ENCODE measurements at regions of chr17 and their contacts with region 1.

Region 1: DNA sequence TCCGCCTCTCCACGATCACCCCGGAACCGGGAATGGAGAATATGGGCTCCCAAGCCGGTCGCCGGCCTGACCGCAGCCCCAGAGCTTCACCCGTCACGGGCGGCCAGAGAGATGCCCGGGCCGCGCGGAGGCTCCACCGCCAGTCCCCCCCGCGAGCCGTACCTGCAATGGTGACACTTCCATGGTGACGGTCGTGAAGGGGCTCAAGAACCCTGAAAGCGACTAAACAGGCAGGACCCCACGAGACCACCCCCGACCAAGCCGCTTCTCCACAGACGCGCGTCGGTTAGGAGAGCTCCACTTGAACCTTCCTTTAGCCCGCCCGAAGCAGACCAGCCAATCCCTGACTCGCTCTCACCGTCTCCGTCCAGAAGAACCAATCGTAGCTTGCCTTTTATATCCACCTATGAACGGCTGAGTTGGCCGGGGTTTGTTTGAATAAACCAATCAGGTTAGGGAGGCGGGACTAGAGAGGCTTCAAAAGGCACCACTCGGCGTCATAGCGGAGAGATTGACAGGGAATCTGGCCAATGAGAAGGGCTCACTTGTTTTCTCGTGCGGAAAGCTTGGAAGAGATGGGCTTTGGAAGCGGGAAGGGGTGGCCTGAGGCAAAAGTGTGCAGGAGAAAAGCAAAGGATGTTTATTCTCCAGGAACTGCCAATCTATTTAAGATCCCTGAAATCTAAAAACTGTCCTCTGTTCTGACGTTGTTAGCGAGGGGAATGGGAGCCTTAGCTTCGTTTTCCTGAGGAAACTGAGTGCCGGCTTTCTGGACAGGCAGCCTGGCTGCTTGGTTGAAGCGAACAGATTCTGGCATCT is at the start of gene TOP2A:
- DNase-seq: peak; percentile 90 to 99 (median 95)
- ATAC-seq: peak; percentile 99
- H3K4me3 ChIP-seq: peak within 1 kb of the TSS; percentile 75
- H3K4me3 Mint-ChIP-seq: peak within 1 kb of the TSS; percentile 92
- H3K27ac ChIP-seq: peak within 1 kb of the TSS; percentile 42 to 49
- H3K27ac Mint-ChIP-seq: peak within 1 kb of the TSS; percentile 91
- H3K4me1 ChIP-seq: peaks cover 6% of the 10 kb centered on the region
- H3K4me1 Mint-ChIP-seq: peaks cover 17% of the 10 kb centered on the region
- H3K27me3 ChIP-seq: no peaks in the 10 kb centered on the region
- H3K27me3 Mint-ChIP-seq: peaks cover 3% of the 10 kb centered on the region
- CTCF ChIP-seq: no peak
- total RNA-seq, gene TOP2A: 2.9 TPM

Region 2: GRCh38 chr17:40203131-40203530 is 214.7 kb before region 1 on chr17:
- CTCF ChIA-PET with region 1: no interaction called
- POLR2A ChIA-PET with region 1: no interaction called
- intact Hi-C with region 1: loop called in 1 of 2 experiments (anchors 5 kb)
- DNase-seq: no peak
- ATAC-seq: no peak
- H3K4me3 ChIP-seq: no peak overlapping the region
- H3K4me3 Mint-ChIP-seq: no peak overlapping the region
- H3K27ac ChIP-seq: no peak overlapping the region
- H3K27ac Mint-ChIP-seq: no peak overlapping the region
- H3K4me1 ChIP-seq: no peaks in the 10 kb centered on the region
- H3K4me1 Mint-ChIP-seq: peaks cover 8% of the 10 kb centered on the region
- H3K27me3 ChIP-seq: peaks cover 0 to 4% of the 10 kb centered on the region in 2 experiments
- H3K27me3 Mint-ChIP-seq: peaks cover 6% of the 10 kb centered on the region
- CTCF ChIP-seq: no peak

Region 3: DNA sequence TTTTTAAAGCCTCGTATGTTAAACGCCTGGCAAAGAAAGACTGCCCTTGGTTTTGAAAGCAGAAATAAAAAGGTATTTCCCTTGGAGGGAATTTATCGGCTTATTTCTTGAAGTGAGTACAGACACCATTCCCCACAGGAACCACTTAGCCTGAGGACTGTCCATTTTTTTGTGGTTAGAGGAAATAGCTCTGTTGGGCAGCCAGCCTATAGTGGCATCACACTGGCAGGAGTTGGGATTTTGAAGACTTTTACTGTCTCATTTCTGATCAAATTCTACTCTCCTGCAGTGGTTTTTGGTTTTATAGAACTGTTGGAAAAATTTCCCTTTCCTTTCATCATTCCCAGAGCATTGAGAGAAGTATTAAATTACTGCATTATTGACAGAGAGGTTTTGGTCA is 164.3 kb before region 1 on chr17:
- CTCF ChIA-PET with region 1: no interaction called
- POLR2A ChIA-PET with region 1: no interaction called
- intact Hi-C with region 1: no loop called
- DNase-seq: no peak
- ATAC-seq: no peak
- H3K4me3 ChIP-seq: no peak overlapping the region
- H3K4me3 Mint-ChIP-seq: no peak overlapping the region
- H3K27ac ChIP-seq: no peak overlapping the region
- H3K27ac Mint-ChIP-seq: no peak overlapping the region
- H3K4me1 ChIP-seq: no peaks in the 10 kb centered on the region
- H3K4me1 Mint-ChIP-seq: peaks cover 31% of the 10 kb centered on the region
- H3K27me3 ChIP-seq: no peaks in the 10 kb centered on the region
- H3K27me3 Mint-ChIP-seq: no peaks in the 10 kb centered on the region
- CTCF ChIP-seq: no peak

Region 4: DNA sequence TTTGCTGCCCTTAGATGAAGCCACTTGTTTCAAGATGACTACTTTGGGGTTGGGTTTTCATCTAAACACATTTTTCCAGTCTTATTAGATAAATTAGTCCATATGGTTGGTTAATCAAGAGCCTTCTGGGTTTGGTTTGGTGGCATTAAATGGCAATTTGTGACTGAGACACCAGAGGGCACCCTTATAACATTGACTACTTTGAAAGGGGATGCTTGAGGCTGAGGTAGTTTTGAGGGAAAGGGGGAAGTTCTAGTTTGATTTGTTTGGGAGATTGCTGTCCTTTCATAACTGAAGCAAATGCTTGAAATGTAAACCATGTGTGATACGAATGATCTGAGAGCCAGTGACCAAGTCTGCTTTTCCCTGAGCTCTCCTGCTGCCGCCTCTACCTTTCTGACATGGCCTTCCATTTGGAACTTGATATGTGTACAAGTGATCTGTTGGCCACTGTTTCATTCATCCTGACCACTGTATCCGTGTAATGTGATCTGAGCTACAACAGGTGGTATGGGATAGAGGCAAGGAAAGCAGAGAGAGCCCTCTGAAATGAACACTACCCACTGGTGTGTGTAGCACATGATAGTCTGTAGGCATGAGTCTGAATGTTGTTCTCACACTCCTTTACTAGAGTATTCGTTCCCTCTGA is 114.7 kb before region 1 on chr17:
- CTCF ChIA-PET with region 1: interaction called, 12 read pairs
- POLR2A ChIA-PET with region 1: interaction called, 3 read pairs
- intact Hi-C with region 1: loop called in 1 of 2 experiments (anchors 2 kb)
- DNase-seq: peak in 5 of 9 experiments; percentile 41 to 83 (median 66)
- ATAC-seq: peak; percentile 69
- H3K4me3 ChIP-seq: no peak overlapping the region
- H3K4me3 Mint-ChIP-seq: no peak overlapping the region
- H3K27ac ChIP-seq: no peak overlapping the region
- H3K27ac Mint-ChIP-seq: no peak overlapping the region
- H3K4me1 ChIP-seq: peaks cover 35% of the 10 kb centered on the region
- H3K4me1 Mint-ChIP-seq: peaks cover 12% of the 10 kb centered on the region
- H3K27me3 ChIP-seq: no peaks in the 10 kb centered on the region
- H3K27me3 Mint-ChIP-seq: no peaks in the 10 kb centered on the region
- CTCF ChIP-seq: peak; percentile 85

Region 5: GRCh38 chr17:40399185-40399584 is 18.6 kb before region 1 on chr17:
- CTCF ChIA-PET with region 1: interaction called, 7 read pairs
- POLR2A ChIA-PET with region 1: no interaction called
- intact Hi-C with region 1: loop called in 1 of 2 experiments (anchors 2 kb)
- DNase-seq: peak in 2 of 9 experiments; percentile 71 to 78
- ATAC-seq: peak; percentile 55
- H3K4me3 ChIP-seq: no peak overlapping the region
- H3K4me3 Mint-ChIP-seq: no peak overlapping the region
- H3K27ac ChIP-seq: no peak overlapping the region
- H3K27ac Mint-ChIP-seq: no peak overlapping the region
- H3K4me1 ChIP-seq: no peaks in the 10 kb centered on the region
- H3K4me1 Mint-ChIP-seq: peaks cover 16% of the 10 kb centered on the region
- H3K27me3 ChIP-seq: no peaks in the 10 kb centered on the region
- H3K27me3 Mint-ChIP-seq: no peaks in the 10 kb centered on the region
- CTCF ChIP-seq: peak; percentile 74

Region 6: DNA sequence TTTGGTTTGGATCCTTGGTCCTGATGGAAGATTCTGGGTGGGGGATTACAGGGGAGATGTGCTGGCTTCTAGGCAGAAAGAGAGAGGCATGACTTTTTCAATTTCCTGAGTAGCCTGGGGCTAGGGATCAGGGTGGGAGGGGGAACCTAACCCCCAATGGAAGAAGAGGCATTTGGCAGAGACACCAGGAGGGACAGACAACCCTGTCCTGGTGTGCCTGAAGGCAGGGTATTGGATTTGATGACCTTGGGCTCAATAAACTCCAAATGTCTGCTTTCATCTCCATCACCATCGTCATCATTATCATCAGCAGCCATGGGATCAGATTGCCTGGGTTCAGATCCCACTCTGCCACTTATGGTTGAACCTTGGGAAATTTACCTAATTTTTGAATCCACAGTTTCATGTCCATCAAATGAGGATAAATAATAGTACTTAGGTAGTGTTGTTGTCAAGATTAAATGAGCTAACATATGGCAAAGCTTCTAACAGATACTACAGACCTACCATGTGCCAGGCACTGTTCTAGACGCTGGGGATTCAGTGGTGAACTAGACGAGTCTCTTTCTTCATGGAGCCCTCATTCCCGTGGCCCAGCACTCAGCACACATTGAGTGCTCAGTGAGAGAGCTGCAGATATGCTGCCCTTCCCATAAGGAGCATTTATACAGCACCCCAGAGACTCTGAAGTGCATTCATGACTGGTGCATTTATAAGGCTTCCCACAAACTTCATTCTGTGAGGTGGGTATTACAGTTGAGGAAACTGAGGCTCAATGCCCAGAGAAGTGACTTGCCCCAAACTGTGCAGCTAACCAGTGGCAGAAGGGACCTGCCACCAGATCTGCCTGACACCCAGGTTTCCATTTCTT is 52.2 kb after region 1 on chr17:
- CTCF ChIA-PET with region 1: no interaction called
- POLR2A ChIA-PET with region 1: no interaction called
- intact Hi-C with region 1: no loop called
- DNase-seq: no peak
- ATAC-seq: no peak
- H3K4me3 ChIP-seq: no peak overlapping the region
- H3K4me3 Mint-ChIP-seq: no peak overlapping the region
- H3K27ac ChIP-seq: no peak overlapping the region
- H3K27ac Mint-ChIP-seq: no peak overlapping the region
- H3K4me1 ChIP-seq: no peaks in the 10 kb centered on the region
- H3K4me1 Mint-ChIP-seq: no peaks in the 10 kb centered on the region
- H3K27me3 ChIP-seq: no peaks in the 10 kb centered on the region
- H3K27me3 Mint-ChIP-seq: no peaks in the 10 kb centered on the region
- CTCF ChIP-seq: no peak

Region 7: DNA sequence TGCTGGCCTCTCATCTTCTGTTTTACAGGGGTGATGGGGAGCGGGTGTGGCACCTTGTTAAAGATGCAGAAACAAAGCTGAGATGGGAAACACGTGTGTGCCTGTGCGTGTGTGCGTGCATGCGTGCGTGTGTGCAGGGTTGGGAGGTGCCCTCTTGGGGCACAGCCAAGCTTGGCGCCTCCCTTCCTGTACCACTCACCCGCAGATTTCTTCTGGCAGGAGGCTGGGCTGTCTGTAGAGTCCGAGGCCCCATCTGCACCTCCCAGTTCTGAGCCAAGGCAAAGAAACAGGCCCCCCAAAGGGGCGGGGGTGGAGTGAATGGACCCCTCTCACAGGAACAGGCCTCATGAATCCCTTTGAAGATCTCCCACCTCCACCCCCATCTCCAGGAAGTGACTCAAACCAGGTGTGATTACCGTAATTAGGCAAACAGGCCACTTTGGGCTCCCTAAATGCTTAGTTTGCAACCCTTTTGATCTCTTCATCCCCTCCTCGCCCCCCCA is 62.7 kb after region 1 on chr17:
- CTCF ChIA-PET with region 1: interaction called, 3 read pairs
- POLR2A ChIA-PET with region 1: no interaction called
- intact Hi-C with region 1: loop called (anchors 1 to 2 kb)
- DNase-seq: peak; percentile 65 to 97 (median 82)
- ATAC-seq: peak; percentile 86
- H3K4me3 ChIP-seq: peak overlapping the region in 1 of 2 experiments; percentile 3
- H3K4me3 Mint-ChIP-seq: peak overlapping the region; percentile 50
- H3K27ac ChIP-seq: peak overlapping the region; percentile 65 to 93
- H3K27ac Mint-ChIP-seq: peak overlapping the region; percentile 98
- H3K4me1 ChIP-seq: peaks cover 37% of the 10 kb centered on the region
- H3K4me1 Mint-ChIP-seq: peaks cover 54% of the 10 kb centered on the region
- H3K27me3 ChIP-seq: no peaks in the 10 kb centered on the region
- H3K27me3 Mint-ChIP-seq: no peaks in the 10 kb centered on the region
- CTCF ChIP-seq: no peak

Region 8: DNA sequence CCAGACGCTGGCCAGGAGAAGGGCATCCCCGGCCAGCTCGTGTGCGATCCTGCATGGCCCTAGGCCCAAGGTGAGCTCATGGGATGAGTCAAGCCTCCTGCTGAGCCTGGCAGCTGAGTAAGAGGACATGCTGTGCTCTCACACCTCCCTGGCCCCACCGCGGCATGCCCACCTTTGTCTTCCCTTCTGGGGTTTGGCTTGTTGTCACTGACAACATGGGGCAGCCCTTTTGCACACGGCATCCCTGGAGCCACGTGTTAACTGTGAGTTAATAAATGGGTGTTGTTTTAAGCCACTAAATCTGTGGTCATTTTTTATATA is 92.5 kb after region 1 on chr17:
- CTCF ChIA-PET with region 1: no interaction called
- POLR2A ChIA-PET with region 1: no interaction called
- intact Hi-C with region 1: no loop called
- DNase-seq: no peak
- ATAC-seq: no peak
- H3K4me3 ChIP-seq: no peak overlapping the region
- H3K4me3 Mint-ChIP-seq: no peak overlapping the region
- H3K27ac ChIP-seq: no peak overlapping the region
- H3K27ac Mint-ChIP-seq: no peak overlapping the region
- H3K4me1 ChIP-seq: peaks cover 10% of the 10 kb centered on the region
- H3K4me1 Mint-ChIP-seq: peaks cover 26% of the 10 kb centered on the region
- H3K27me3 ChIP-seq: no peaks in the 10 kb centered on the region
- H3K27me3 Mint-ChIP-seq: peaks cover 4% of the 10 kb centered on the region
- CTCF ChIP-seq: no peak

Region 9: DNA sequence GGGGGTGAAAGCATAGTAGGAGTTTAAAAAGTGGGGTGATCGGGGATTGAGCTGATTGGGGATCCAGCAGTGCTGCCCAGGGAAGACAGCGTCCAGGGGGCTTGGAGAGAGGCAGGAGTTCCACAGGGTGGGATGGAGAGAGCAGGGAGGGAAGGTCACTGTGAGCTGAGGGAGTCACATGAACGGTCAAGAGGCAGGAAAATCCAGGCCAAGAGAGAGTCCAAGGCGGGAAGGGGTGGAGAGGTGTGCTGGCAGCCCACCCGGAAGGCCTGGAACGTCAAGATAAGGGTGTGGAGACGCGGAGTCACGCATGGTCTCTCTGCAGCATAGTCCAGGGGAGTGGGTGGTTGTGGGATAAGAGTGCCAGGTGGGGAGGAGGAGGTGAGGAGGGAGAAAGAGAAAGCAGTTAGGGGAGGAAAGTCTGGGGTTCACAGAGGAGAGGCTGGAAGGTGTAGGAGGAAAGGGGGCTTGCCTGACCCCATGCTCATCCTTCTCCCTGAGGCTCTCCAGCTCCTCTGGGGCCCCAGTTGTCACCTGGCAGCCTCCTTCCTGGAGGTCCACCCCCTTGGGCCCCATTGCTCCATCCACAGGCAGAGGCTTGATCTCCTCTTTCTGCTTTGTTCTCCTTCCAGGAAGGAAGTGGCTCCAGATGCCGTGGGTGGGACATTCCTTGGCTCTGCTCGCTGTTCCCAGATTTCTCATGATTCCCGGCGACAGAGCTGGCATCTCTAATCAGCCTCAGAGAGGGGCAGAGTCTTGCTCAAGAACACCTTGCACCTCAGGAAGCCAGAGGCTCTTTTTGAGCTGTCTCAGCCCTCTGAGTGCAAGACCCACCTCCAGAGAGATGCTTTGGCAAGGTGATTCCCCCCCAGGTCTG is 118.7 kb after region 1 on chr17:
- CTCF ChIA-PET with region 1: interaction called, 62 read pairs
- POLR2A ChIA-PET with region 1: interaction called, 17 read pairs
- intact Hi-C with region 1: loop called (anchors 1 kb)
- DNase-seq: peak in 1 of 9 experiments; percentile 38
- ATAC-seq: no peak
- H3K4me3 ChIP-seq: no peak overlapping the region
- H3K4me3 Mint-ChIP-seq: no peak overlapping the region
- H3K27ac ChIP-seq: no peak overlapping the region
- H3K27ac Mint-ChIP-seq: peak overlapping the region; percentile 85
- H3K4me1 ChIP-seq: peaks cover 88% of the 10 kb centered on the region
- H3K4me1 Mint-ChIP-seq: peaks cover 96% of the 10 kb centered on the region
- H3K27me3 ChIP-seq: no peaks in the 10 kb centered on the region
- H3K27me3 Mint-ChIP-seq: no peaks in the 10 kb centered on the region
- CTCF ChIP-seq: no peak